Naive thymus-derived CD4-positive, alpha-beta T cell (primary cell): ENCODE measurements at regions of chr19 and their contacts with region 1.

Region 1: GRCh38 chr19:55385740-55386529 is at the start of gene RPL28:
- DNase-seq: peak; percentile 92 to 99 (median 99)
- ATAC-seq: peak; percentile 89
- H3K4me3 ChIP-seq: peak within 1 kb of the TSS; percentile 92
- H3K4me3 Mint-ChIP-seq: peak within 1 kb of the TSS; percentile 94 to 100 (median 100)
- H3K27ac ChIP-seq: peak within 1 kb of the TSS; percentile 91
- H3K27ac Mint-ChIP-seq: peak within 1 kb of the TSS; percentile 91 to 100 (median 99)
- H3K4me1 ChIP-seq: peaks cover 45 to 53% of the 10 kb centered on the region in 2 donors
- H3K4me1 Mint-ChIP-seq: peaks cover 41 to 79% (median 70%) of the 10 kb centered on the region in 7 donors
- H3K27me3 ChIP-seq: no peaks in the 10 kb centered on the region
- H3K27me3 Mint-ChIP-seq: peaks cover 0 to 3% (median 0%) of the 10 kb centered on the region in 5 donors
- total RNA-seq, gene RPL28: 2,549 to 3,799 (median 3,242) TPM

Region 2: GRCh38 chr19:55178781-55179599 is 206.9 kb before region 1 on chr19:
- CTCF ChIA-PET with region 1: no interaction called
- POLR2A ChIA-PET with region 1: no interaction called
- intact Hi-C with region 1: loop called in 1 of 2 experiments (anchors 1 kb)
- DNase-seq: peak; percentile 87 to 98 (median 92)
- ATAC-seq: peak; percentile 93
- H3K4me3 ChIP-seq: peak overlapping the region; percentile 64
- H3K4me3 Mint-ChIP-seq: peak overlapping the region; percentile 49 to 85 (median 82)
- H3K27ac ChIP-seq: peak overlapping the region; percentile 41
- H3K27ac Mint-ChIP-seq: peak overlapping the region; percentile 38 to 94 (median 86)
- H3K4me1 ChIP-seq: peaks cover 15 to 32% of the 10 kb centered on the region in 2 donors
- H3K4me1 Mint-ChIP-seq: peaks cover 9 to 36% (median 26%) of the 10 kb centered on the region in 7 donors
- H3K27me3 ChIP-seq: peaks cover 13 to 50% of the 10 kb centered on the region in 2 donors
- H3K27me3 Mint-ChIP-seq: peaks cover 63 to 79% (median 67%) of the 10 kb centered on the region in 5 donors

Region 3: DNA sequence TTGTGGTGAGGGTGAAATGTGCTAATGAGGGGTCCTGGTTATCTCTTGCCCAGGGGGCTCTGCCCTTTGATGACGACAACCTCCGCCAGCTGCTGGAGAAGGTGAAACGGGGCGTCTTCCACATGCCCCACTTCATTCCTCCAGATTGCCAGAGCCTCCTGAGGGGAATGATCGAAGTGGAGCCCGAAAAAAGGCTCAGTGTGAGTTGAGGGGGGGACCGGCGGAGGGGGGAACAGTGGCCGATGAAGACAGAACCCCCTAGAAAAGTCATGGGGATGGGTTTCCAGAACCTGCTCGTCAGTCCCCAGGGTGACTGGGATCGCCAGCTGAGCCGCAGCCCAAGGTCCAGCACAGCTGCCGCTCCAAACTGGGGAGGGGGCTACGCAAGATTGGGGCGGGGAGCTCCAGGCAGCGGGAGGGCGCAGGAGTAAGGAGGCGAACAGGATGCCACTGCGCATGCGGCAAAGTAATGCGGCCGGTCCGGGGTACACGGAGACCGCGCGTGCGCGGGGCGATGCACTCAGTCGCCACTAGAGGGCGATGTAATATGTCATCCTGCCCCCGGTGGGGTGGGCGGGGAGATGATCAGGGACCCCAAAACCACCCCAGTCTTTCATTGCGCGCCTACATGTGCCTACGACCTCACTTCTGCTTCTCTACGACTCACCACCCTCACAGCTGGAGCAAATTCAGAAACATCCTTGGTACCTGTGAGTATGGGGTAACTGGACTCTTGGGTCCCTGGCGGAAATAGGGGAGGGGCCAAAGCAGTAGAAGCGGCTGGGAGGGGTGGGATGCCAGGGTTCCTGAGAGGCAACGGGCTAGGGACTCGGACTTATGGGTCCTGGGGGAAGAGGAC is 84.2 kb before region 1 on chr19:
- CTCF ChIA-PET with region 1: interaction called, 16 read pairs
- POLR2A ChIA-PET with region 1: interaction called, 21 read pairs
- intact Hi-C with region 1: loop called (anchors 1 kb)
- DNase-seq: peak; percentile 84 to 97 (median 91)
- ATAC-seq: peak; percentile 97
- H3K4me3 ChIP-seq: peak overlapping the region; percentile 61
- H3K4me3 Mint-ChIP-seq: peak overlapping the region; percentile 77 to 97 (median 88)
- H3K27ac ChIP-seq: peak overlapping the region; percentile 66
- H3K27ac Mint-ChIP-seq: peak overlapping the region; percentile 66 to 95 (median 84)
- H3K4me1 ChIP-seq: peaks cover 5 to 10% of the 10 kb centered on the region in 2 donors
- H3K4me1 Mint-ChIP-seq: peaks cover 0 to 17% (median 11%) of the 10 kb centered on the region in 7 donors
- H3K27me3 ChIP-seq: no peaks in the 10 kb centered on the region
- H3K27me3 Mint-ChIP-seq: peaks cover 0 to 3% (median 0%) of the 10 kb centered on the region in 5 donors

Region 4: DNA sequence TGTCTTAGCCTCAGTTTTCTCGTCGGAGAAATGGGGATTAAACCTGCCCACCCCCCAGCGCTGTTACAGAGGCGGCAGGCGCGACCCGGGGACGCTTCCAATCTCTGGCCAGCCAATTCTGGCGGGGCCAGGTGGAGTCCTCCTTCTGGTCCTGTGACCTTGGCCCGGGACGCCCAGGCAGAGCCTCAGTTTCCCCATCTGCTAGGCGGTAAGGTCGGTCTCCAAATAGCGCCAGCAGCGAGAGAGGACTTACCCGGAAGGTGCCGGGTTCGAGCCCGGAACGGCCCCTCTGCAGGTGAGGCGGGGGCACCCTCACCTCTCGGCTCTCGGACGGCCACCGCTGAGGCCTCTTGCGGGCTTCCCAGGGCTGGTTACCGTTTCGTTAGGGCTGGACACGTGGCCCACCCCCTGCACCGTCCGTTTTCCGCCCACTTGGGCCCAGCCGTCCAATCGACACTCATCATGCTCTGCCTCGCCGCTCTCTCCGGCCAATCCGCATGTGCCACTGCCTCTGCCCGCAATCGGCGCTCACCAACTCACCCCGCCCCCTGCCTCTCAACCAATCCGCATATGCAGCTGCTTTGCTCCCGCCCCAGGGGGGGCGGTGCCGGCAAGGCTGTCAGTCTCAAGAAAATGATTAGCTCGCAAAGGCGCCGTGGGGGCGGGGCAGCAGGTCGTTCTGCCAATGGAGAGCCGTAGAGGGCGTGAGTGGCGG is 75.5 kb after region 1 on chr19 and contains the start of gene ISOC2:
- CTCF ChIA-PET with region 1: no interaction called
- POLR2A ChIA-PET with region 1: interaction called, 5 read pairs
- intact Hi-C with region 1: loop called in 1 of 2 experiments (anchors 1 kb)
- DNase-seq: peak; percentile 99 to 100 (median 100)
- ATAC-seq: peak; percentile 98
- H3K4me3 ChIP-seq: peak within 1 kb of the TSS; percentile 91
- H3K4me3 Mint-ChIP-seq: peak within 1 kb of the TSS; percentile 86 to 99 (median 92)
- H3K27ac ChIP-seq: peak within 1 kb of the TSS; percentile 79
- H3K27ac Mint-ChIP-seq: peak within 1 kb of the TSS; percentile 68 to 94 (median 90)
- H3K4me1 ChIP-seq: peaks cover 4 to 12% of the 10 kb centered on the region in 2 donors
- H3K4me1 Mint-ChIP-seq: peaks cover 14 to 33% (median 20%) of the 10 kb centered on the region in 7 donors
- H3K27me3 ChIP-seq: no peaks in the 10 kb centered on the region
- H3K27me3 Mint-ChIP-seq: peaks cover 0 to 2% (median 0%) of the 10 kb centered on the region in 5 donors
- total RNA-seq, gene ISOC2: 5.1 to 20.1 (median 11.3) TPM

Region 5: GRCh38 chr19:55653758-55654539 is 268.0 kb after region 1 on chr19:
- CTCF ChIA-PET with region 1: no interaction called
- POLR2A ChIA-PET with region 1: interaction called, 7 read pairs
- intact Hi-C with region 1: loop called (anchors 1 kb)
- DNase-seq: peak; percentile 95 to 100 (median 100)
- ATAC-seq: peak; percentile 83
- H3K4me3 ChIP-seq: peak overlapping the region; percentile 98
- H3K4me3 Mint-ChIP-seq: peak overlapping the region; percentile 83 to 99 (median 96)
- H3K27ac ChIP-seq: peak overlapping the region; percentile 99
- H3K27ac Mint-ChIP-seq: peak overlapping the region; percentile 95 to 100 (median 99)
- H3K4me1 ChIP-seq: peaks cover 30 to 36% of the 10 kb centered on the region in 2 donors
- H3K4me1 Mint-ChIP-seq: peaks cover 29 to 55% (median 39%) of the 10 kb centered on the region in 7 donors
- H3K27me3 ChIP-seq: no peaks in the 10 kb centered on the region
- H3K27me3 Mint-ChIP-seq: peaks cover 0 to 2% (median 0%) of the 10 kb centered on the region in 5 donors